ENCODE measurements at regions of chr1 and their contacts with region 1.

Region 1: GRCh38 chr1:113140588-113141446 is 67.8 kb downstream of the LRIG2 start:
- DNase-seq: peak; percentile 73
- H3K4me3 ChIP-seq: peak overlapping the region in 1 of 4 donors; percentile 3
- H3K27ac ChIP-seq: peak overlapping the region in 2 of 4 donors; percentile 15 to 23
- H3K4me1 ChIP-seq: peaks cover 9 to 19% (median 9%) of the 10 kb centered on the region in 4 donors
- H3K27me3 ChIP-seq: no peaks in the 10 kb centered on the region
- CTCF ChIP-seq: peak; percentile 76 to 89 (median 78)
- EP300 ChIP-seq: no peak
- POLR2A ChIP-seq: no peak

Region 2: DNA sequence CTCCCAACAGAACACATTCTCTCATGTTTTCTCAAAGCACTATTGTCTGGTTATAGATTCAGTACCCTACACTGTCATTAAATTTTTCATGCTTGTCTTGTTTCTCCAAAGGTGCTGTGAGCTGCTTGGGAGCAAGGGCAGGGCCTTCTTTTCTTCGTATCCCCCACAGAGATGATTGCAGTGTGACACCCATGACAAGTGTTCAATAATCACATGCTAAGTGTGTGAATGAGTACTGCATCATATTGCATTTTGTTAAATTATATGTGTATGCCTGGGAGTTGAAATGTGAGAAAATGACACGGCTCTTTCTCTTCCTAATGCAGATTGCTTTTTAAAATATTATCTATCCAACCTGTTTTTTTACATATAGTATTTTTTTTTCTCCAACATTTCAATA is 192.2 kb after region 1 on chr1:
- in situ Hi-C with region 1: no loop called
- intact Hi-C with region 1: no loop called
- DNase-seq: no peak
- H3K4me3 ChIP-seq: no peak overlapping the region
- H3K27ac ChIP-seq: no peak overlapping the region
- H3K4me1 ChIP-seq: no peaks in the 10 kb centered on the region
- H3K27me3 ChIP-seq: no peaks in the 10 kb centered on the region
- CTCF ChIP-seq: no peak
- EP300 ChIP-seq: no peak
- POLR2A ChIP-seq: no peak

Region 3: DNA sequence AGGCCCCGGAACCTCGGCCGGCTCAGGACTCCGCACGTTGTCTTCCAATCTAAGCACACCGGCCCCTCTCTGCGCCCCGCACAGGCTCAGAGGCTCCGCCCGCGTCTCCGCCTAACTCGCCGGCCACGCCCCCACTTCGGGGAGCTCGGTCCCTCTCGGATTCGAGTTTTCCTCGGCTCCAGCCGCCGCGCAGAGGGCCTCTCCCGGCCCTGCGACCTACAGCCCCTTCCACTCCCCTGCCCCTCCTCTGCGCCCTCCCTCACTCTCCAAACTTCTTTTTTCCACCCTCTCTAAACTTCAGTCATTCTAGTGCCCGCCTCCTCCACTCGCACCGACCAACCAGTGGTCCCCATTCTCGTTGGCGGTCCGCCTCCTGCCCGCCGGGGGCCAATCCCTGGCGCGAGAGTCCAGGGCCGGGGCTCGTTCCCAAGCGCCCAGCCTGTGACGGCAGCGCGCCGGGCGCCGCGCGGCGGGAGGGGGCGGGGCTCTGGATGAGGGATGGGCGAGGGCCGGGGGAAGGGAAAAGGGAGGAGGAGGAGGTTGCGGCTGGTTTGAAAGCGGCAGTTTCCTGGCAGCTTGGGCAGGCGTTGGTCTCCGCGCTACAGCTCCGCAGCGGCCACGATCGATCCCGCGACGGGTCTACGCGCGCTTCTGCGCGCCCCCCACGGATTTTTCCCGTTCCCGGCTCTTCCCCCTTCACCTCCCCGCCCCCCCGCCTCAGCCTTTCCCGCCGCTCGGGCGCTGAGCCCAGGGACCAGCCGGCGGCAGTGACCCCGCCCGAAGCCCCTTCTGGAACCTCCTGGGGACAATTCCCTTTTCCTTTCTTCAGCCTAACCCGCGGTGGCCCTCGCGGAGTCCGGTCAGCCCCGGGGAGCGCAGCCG is 249.4 kb after region 1 on chr1 and contains the start of gene MAGI3:
- in situ Hi-C with region 1: loop called in 3 of 4 experiments (anchors 25 kb)
- intact Hi-C with region 1: no loop called
- DNase-seq: peak; percentile 98
- H3K4me3 ChIP-seq: peak within 1 kb of the TSS; percentile 86 to 99 (median 96)
- H3K27ac ChIP-seq: peak within 1 kb of the TSS; percentile 90 to 98 (median 96)
- H3K4me1 ChIP-seq: peaks cover 3 to 39% (median 36%) of the 10 kb centered on the region in 4 donors
- H3K27me3 ChIP-seq: no peaks in the 10 kb centered on the region
- CTCF ChIP-seq: no peak
- EP300 ChIP-seq: no peak
- POLR2A ChIP-seq: peak; percentile 96
- total RNA-seq, gene MAGI3: 94.3 to 180 (median 134) TPM

Region 4: GRCh38 chr1:113405573-113405972 is 264.8 kb after region 1 on chr1:
- in situ Hi-C with region 1: loop called in 1 of 4 experiments (anchors 10 kb)
- intact Hi-C with region 1: no loop called
- DNase-seq: no peak
- H3K4me3 ChIP-seq: no peak overlapping the region
- H3K27ac ChIP-seq: no peak overlapping the region
- H3K4me1 ChIP-seq: peaks cover 0 to 15% (median 0%) of the 10 kb centered on the region in 4 donors
- H3K27me3 ChIP-seq: no peaks in the 10 kb centered on the region
- CTCF ChIP-seq: no peak
- EP300 ChIP-seq: no peak
- POLR2A ChIP-seq: no peak

Region 5: DNA sequence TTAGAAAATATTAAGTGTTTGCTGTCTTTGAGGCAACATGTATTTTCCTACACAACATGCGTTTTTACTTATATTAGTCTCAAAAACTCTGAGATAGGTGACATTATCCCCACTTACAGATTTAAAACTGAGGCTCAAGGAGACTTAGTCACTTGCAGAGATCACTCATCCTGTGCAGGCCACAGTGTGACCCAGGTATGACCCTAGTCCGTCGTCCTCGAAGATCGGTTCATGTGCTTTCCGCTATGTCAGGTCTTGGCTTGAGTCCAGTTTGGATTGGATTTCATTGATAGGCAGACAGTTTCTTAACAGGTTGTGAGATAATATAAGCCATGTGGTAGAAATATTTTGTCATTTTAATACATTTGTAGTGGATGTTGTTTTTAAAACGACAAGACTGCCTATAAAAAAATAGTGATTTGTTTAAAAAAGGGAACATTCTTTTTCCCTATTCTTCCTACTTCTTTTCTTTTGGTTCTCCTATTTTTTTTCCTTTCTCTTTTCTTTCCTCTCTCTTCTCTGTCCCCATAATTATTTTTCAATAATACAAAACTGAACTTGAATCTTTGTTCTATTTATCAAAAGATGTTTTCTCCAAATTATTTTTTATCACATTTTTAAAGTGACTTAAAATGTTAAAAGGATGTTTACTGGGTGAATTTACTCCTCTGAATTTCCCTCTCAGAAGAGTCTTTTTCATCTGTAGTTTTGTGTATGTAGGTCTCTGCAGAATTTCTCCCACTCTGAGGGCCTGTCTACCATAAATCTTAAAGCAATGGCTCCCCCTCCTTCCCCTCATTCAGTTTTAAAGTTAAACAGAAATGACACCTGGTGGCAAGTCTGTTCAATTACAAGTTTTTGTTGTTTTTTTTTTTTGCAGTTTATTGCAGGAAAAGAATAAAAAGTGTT is 536.7 kb after region 1 on chr1:
- in situ Hi-C with region 1: loop called in 3 of 4 experiments (anchors 10 kb)
- intact Hi-C with region 1: loop called (anchors 5 kb)
- DNase-seq: no peak
- H3K4me3 ChIP-seq: no peak overlapping the region
- H3K27ac ChIP-seq: no peak overlapping the region
- H3K4me1 ChIP-seq: peaks cover 0 to 9% (median 0%) of the 10 kb centered on the region in 4 donors
- H3K27me3 ChIP-seq: no peaks in the 10 kb centered on the region
- CTCF ChIP-seq: peak; percentile 56 to 62 (median 57)
- EP300 ChIP-seq: no peak
- POLR2A ChIP-seq: no peak

Region 6: GRCh38 chr1:113684153-113684541 is 543.3 kb after region 1 on chr1:
- in situ Hi-C with region 1: loop called in 3 of 4 experiments (anchors 10 kb)
- intact Hi-C with region 1: loop called (anchors 5 kb)
- DNase-seq: peak; percentile 41
- H3K4me3 ChIP-seq: no peak overlapping the region
- H3K27ac ChIP-seq: peak overlapping the region; percentile 32 to 71 (median 56)
- H3K4me1 ChIP-seq: peaks cover 0 to 11% (median 3%) of the 10 kb centered on the region in 4 donors
- H3K27me3 ChIP-seq: no peaks in the 10 kb centered on the region
- CTCF ChIP-seq: no peak
- EP300 ChIP-seq: no peak
- POLR2A ChIP-seq: no peak

Region 7: GRCh38 chr1:113811888-113812660 is 671.3 kb after region 1 on chr1 and contains the start of gene RSBN1:
- in situ Hi-C with region 1: loop called in 1 of 4 experiments (anchors 25 kb)
- intact Hi-C with region 1: no loop called
- DNase-seq: peak; percentile 99
- H3K4me3 ChIP-seq: peak within 1 kb of the TSS; percentile 90 to 98 (median 96)
- H3K27ac ChIP-seq: peak within 1 kb of the TSS; percentile 98 to 100 (median 98)
- H3K4me1 ChIP-seq: peaks cover 8 to 44% (median 26%) of the 10 kb centered on the region in 4 donors
- H3K27me3 ChIP-seq: no peaks in the 10 kb centered on the region
- CTCF ChIP-seq: peak in 3 of 5 experiments; percentile 16 to 46 (median 27)
- EP300 ChIP-seq: peak; percentile 26
- POLR2A ChIP-seq: peak; percentile 98
- total RNA-seq, gene RSBN1: 26.6 to 42.7 (median 31.8) TPM

Measured in transverse colon (tissue), 4 donors.